Dendritic cell treated with granulocyte-macrophage colony-stimulating factor and Interleukin-4, amounts not matched to agents 40 ng/mL and 50 ng/mL, for 4 days (primary cell): ENCODE measurements at regions of chr18 and their contacts with region 1.

Region 1: GRCh38 chr18:2857491-2858131 is 10.8 kb downstream of the EMILIN2 start:
- H3K4me3 Mint-ChIP-seq: peak overlapping the region; percentile 61
- H3K27ac Mint-ChIP-seq: peak overlapping the region; percentile 97
- H3K4me1 Mint-ChIP-seq: peaks cover 79% of the 10 kb centered on the region
- H3K27me3 Mint-ChIP-seq: no peaks in the 10 kb centered on the region

Region 2: DNA sequence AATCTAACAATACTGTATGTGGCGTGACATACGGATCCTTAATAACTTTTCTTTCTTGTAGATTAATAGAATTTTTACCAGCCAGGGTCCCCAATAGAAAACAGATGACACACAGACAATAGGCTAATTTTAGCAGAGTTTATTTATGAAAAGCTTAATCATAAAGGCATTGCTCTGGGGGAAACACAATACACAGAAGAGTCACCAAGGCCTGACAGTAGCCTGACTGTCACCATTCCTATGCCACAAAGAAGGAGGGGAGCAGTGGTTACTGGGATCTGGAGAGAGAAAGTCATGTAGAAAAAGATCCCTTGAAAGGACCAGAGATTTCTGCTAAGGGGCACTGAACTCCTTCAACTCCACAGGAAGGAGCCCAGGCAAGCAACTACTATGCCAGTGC is 425.8 kb before region 1 on chr18:
- intact Hi-C with region 1: no loop called
- H3K4me3 Mint-ChIP-seq: no peak overlapping the region
- H3K27ac Mint-ChIP-seq: no peak overlapping the region
- H3K4me1 Mint-ChIP-seq: no peaks in the 10 kb centered on the region
- H3K27me3 Mint-ChIP-seq: peaks cover 6% of the 10 kb centered on the region

Region 3: DNA sequence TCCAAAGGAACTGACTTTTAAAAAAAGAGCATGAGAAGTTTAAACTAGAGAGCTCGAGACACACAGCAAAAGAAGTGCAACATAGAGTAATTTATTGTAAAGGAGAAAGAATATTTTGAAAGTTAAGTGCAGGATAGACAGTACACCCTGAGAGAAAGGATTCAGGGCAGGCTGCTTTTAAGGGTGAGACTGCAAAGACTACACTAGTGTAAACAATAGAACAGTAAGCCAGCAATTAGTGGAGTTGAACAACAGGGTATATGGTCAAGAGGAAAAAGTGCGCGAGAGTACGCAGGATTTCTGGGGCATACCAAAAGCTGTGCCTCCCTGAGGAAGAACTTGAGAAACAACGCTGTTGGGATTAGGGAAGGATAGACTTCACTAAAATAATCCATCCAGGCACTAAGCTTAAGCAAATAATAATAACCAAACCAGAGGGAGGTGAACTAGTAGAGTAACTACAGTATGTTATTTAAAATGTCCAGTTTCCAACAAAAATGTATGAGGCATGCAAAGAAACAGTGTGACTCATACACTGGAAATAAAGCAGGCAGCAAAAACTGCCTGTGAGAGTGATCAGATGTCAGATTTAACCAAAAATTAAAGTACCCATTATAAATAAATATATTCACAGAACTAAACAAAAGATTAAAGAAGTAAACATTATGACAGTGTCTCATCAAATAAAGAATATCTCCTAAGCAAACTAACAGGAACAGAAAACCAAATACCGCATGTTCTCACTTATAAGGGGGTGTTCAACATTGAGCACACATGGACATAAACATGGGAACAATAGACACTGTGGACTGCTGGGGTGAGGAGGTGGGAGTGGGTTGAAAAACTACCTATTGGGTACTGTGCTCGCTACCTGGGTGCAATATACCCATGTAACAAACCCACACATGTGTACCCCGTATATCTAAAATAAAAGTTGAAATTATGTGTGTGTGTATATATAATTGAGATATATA is 51.4 kb before region 1 on chr18:
- intact Hi-C with region 1: loop called (anchors 10 kb)
- H3K4me3 Mint-ChIP-seq: no peak overlapping the region
- H3K27ac Mint-ChIP-seq: no peak overlapping the region
- H3K4me1 Mint-ChIP-seq: no peaks in the 10 kb centered on the region
- H3K27me3 Mint-ChIP-seq: no peaks in the 10 kb centered on the region

Region 4: GRCh38 chr18:2846636-2847364 is 10.8 kb before region 1 on chr18 and contains the start of gene EMILIN2:
- intact Hi-C with region 1: loop called (anchors 1 kb)
- H3K4me3 Mint-ChIP-seq: peak within 1 kb of the TSS; percentile 97
- H3K27ac Mint-ChIP-seq: no peak within 1 kb of the TSS
- H3K4me1 Mint-ChIP-seq: peaks cover 76% of the 10 kb centered on the region
- H3K27me3 Mint-ChIP-seq: no peaks in the 10 kb centered on the region

Region 5: DNA sequence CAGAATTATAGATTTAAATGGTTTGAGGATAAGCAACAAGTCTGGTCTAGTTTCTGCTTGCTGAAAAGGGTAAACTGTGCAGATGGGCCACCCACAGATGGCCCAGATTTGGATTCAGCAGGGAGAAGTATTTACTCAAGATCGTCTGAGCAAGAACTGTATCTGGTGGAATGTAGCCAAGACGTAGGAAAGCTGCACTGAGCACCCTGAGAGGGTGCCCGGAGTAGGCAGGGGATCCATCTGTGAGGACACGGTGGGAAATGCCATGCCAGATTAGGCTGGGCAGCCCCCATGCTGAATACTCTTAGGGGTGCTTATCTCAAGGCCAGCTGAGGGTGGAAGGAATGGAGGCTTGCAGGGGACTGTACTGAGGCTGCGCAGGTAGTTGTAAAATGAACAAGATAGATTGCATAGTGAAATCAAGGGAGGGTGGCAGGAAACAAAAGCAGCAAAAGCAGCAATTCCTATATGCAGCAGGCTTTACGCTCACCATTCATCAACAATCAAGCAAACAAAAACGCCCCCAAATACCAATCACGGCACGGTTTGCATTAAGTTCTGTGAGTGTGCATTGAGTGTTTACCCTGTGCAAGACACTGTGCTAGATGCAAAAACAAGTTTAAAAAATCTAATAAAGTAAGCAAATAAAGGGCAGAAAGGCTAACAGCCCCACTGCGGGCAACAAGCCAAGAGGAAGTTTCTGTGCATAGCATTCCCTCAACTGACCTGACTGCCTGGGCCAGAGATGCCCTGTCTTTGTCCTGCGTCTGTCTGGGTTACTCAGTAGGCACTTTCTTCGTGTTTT is 187.5 kb after region 1 on chr18:
- intact Hi-C with region 1: no loop called
- H3K4me3 Mint-ChIP-seq: peak overlapping the region; percentile 17
- H3K27ac Mint-ChIP-seq: peak overlapping the region; percentile 47
- H3K4me1 Mint-ChIP-seq: peaks cover 12% of the 10 kb centered on the region
- H3K27me3 Mint-ChIP-seq: no peaks in the 10 kb centered on the region

Region 6: DNA sequence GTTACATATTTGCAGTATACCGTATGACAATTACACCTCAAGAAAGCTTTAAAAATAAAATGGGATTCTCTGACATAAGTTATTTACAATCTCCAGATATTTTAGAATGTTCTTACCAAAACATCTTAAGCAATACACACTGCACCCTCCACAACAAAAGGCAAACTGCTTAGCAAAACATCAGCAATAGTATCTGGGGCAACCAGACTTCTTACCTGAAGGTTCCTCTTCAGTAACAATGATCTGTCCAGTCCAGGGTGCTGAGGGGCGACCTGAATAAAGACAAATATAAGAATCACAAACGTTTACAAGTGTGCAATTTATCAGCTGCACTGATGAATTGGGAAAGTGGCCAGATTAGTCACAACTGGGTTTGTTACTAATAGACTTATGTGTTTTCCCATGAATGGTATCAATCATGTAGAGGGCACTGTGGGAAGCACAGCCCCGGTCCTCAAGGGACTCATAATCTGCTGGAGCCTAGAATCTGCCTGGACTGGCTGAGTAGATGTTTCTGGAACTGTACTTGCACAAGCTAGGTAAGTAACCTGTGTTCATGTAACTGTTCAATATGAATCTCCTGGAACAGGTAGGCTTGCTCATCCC is 291.4 kb after region 1 on chr18:
- intact Hi-C with region 1: no loop called
- H3K4me3 Mint-ChIP-seq: no peak overlapping the region
- H3K27ac Mint-ChIP-seq: no peak overlapping the region
- H3K4me1 Mint-ChIP-seq: peaks cover 7% of the 10 kb centered on the region
- H3K27me3 Mint-ChIP-seq: no peaks in the 10 kb centered on the region